ENCODE measurements at regions of chr14 and their contacts with region 1.

Region 1: GRCh38 chr14:47917345-47917954 is 242.0 kb upstream of the MDGA2 start:
- DNase-seq: no peak
- ATAC-seq: no peak
- H3K4me3 ChIP-seq: no peak overlapping the region
- H3K27ac ChIP-seq: no peak overlapping the region
- H3K4me1 ChIP-seq: no peaks in the 10 kb centered on the region
- H3K27me3 ChIP-seq: no peaks in the 10 kb centered on the region
- CTCF ChIP-seq: peak in 11 of 12 donors; percentile 16 to 59 (median 47)
- POLR2A ChIP-seq: no peak

Region 2: DNA sequence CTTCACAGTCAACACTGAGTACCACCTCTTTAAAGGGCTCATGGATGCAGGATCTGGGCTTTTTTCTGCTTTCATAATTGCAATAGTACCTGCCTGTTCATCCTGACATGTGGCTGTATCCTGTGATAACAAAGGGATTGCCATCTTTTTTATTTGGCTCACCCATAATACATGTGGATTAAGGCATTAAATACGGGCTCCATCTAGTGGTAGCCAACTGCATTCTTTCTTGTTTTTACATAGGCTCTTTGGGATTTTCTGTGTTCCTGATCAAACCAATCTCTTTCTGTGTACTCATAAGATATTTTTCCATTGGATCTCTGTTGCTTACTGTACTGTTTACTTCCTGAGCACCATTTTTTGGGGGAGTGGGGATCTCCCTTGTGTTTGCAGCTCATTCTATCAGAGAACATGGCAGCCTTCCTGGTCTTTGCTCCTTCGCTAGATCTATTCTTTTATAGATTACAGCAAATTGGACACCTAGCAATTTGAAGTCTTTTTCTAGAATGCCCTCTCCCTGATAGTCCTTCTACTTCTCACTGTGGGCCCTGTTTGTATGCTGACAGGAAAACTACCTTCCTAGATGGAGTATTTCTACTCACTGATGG is 481.3 kb after region 1 on chr14:
- intact Hi-C with region 1: loop called in 3 of 10 experiments (anchors 2 to 10 kb)
- DNase-seq: no peak
- ATAC-seq: no peak
- H3K4me3 ChIP-seq: no peak overlapping the region
- H3K27ac ChIP-seq: no peak overlapping the region
- H3K4me1 ChIP-seq: no peaks in the 10 kb centered on the region
- H3K27me3 ChIP-seq: no peaks in the 10 kb centered on the region
- CTCF ChIP-seq: peak in 11 of 12 donors; percentile 30 to 68 (median 48)
- POLR2A ChIP-seq: no peak

Region 3: DNA sequence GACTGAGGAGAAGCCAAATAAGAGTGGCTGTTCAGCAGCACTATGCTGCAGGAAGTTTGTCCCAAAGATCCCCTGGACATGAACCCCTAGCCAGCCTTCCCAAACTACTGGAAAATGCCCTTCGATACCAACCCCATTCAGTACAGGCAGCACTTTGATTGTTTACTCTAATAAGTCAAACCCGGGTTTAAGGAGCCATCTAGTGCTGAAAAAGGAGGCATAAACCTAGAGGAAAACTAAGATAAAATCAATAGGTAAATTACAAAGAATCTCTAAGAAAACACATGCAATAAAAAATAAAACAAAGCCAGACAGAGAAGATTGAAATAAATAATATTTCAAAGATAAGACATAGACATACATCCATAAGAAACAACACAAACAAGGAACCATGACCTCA is 897.1 kb after region 1 on chr14:
- intact Hi-C with region 1: loop called in 1 of 10 experiments (anchors 10 kb)
- DNase-seq: no peak
- ATAC-seq: no peak
- H3K4me3 ChIP-seq: no peak overlapping the region
- H3K27ac ChIP-seq: no peak overlapping the region
- H3K4me1 ChIP-seq: no peaks in the 10 kb centered on the region
- H3K27me3 ChIP-seq: no peaks in the 10 kb centered on the region
- CTCF ChIP-seq: peak in 4 of 12 donors; percentile 7 to 14 (median 10)
- POLR2A ChIP-seq: no peak

Region 4: DNA sequence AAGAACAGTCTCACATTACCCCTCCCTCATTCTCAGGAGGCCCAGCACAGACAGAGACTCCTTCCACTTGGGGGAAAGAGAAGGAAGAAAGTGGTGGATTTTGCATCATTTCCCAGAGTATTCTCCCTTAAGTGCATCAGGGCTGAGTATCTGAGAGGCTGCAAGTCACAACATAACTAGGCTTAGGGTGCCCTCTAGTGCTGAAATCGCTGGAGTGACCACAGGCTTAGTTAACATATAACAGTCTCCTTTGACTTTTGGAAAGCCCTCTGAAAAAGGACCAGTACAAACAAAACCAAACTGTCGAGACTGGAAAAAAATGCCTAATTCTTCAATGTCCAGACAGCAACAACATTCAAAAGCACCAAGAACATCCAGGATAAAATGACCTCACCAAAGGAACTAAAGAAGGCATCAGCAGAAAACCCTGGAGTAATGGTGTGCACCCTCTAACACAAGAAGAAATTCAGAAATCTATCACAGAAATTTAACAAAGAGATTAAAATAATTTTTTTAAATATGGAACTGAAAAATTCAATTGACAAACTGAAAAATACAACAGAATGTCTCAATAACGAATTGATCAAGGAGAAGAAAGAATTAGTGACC is 1256.4 kb after region 1 on chr14:
- intact Hi-C with region 1: loop called in 9 of 10 experiments (anchors 5 to 10 kb)
- DNase-seq: peak in 1 of 5 donors; percentile 27
- ATAC-seq: peak in 3 of 4 donors; percentile 54 to 76 (median 75)
- H3K4me3 ChIP-seq: no peak overlapping the region
- H3K27ac ChIP-seq: no peak overlapping the region
- H3K4me1 ChIP-seq: no peaks in the 10 kb centered on the region
- H3K27me3 ChIP-seq: no peaks in the 10 kb centered on the region
- CTCF ChIP-seq: peak in 11 of 12 donors; percentile 16 to 55 (median 44)
- POLR2A ChIP-seq: no peak

Region 5: GRCh38 chr14:49306152-49306751 is 1388.8 kb after region 1 on chr14:
- intact Hi-C with region 1: loop called in 1 of 10 experiments (anchors 10 kb)
- DNase-seq: no peak
- ATAC-seq: no peak
- H3K4me3 ChIP-seq: no peak overlapping the region
- H3K27ac ChIP-seq: no peak overlapping the region
- H3K4me1 ChIP-seq: no peaks in the 10 kb centered on the region
- H3K27me3 ChIP-seq: no peaks in the 10 kb centered on the region
- CTCF ChIP-seq: peak in 7 of 12 donors; percentile 7 to 50 (median 28)
- POLR2A ChIP-seq: no peak